Head of caudate nucleus (tissue), 42 donors: ENCODE measurements at regions of chr6 and their contacts with region 1.

Region 1: DNA sequence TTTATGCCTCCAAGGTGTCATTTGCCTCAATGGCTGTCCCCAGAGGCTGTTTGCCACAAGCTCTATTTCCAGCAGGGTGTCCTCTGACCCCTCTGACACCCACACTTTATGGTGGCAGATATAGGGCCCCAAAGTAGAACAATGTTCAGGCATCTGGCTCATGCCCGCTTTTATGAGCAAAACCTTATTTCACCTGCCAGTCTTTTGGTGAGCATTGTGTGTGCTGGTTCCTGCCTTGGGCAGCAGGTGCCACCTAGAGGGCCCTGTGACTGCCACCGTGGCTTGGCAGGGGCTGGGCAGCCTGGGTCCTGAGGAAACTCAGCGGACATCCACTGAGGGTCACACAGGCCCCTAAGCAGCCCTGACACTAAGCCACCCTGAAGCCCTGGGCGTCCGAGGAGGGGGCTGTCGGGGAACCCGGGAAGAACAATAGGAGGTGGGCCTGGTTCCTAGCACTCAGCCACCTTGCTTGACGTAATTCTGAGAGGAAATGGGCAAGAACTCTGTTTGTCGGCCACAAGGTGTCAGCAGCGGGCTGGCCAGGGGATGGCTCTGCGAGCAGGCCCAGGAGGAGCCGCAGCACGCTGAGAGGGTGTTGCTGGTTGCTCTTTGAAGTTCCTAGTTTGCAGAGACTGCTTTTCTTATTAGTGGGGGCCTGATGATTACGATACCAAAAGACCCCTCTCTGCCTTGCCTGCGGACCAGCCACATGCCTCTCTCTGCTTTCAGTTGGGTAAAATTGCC is 148.9 kb downstream of the SCML4 start:
- DNase-seq: peak; percentile 58 to 92 (median 84)

Region 2: DNA sequence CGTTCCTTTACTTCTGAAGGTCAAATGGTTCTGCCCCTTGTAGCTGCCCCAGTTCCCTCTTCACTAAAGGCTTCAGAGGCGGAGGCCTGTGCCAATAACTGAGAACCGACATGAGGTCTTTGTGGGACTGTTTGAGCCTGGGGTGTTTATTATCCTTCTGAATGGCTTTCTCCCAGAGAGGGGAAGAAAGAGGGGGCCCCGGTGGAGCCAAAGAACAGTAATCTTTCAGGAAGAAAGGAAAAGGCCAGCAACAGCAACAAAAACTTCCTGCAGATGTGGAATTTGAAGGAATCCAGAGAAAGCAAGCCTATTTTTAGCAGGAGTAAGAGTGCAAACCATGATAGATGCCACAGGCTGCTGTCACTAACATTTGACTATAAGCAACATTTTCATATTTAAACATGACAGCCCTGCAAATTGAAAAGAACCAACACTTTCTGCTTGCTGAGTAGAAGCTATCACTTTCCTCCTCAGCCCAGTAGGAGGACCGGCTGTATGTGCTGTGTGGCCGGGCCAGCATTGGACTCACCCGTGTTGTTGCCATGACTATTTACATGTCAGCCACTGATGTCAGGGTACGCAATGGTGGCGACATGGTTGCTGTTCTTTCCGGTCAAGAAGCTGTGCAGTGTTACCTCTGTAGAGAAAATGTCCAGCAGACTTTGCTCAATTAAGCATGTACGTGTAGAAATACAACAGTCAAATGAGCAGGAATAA is 63.9 kb before region 1 on chr6:
- intact Hi-C with region 1: no loop called
- DNase-seq: no peak

Region 3: GRCh38 chr6:107731422-107732319 is 56.5 kb after region 1 on chr6:
- intact Hi-C with region 1: no loop called
- DNase-seq: no peak

Region 4: GRCh38 chr6:107847844-107848802 is 173.0 kb after region 1 on chr6:
- intact Hi-C with region 1: loop called (anchors 5 kb)
- DNase-seq: peak; percentile 66 to 94 (median 86)